ENCODE measurements at regions of chr2 and their contacts with region 1.

Region 1: DNA sequence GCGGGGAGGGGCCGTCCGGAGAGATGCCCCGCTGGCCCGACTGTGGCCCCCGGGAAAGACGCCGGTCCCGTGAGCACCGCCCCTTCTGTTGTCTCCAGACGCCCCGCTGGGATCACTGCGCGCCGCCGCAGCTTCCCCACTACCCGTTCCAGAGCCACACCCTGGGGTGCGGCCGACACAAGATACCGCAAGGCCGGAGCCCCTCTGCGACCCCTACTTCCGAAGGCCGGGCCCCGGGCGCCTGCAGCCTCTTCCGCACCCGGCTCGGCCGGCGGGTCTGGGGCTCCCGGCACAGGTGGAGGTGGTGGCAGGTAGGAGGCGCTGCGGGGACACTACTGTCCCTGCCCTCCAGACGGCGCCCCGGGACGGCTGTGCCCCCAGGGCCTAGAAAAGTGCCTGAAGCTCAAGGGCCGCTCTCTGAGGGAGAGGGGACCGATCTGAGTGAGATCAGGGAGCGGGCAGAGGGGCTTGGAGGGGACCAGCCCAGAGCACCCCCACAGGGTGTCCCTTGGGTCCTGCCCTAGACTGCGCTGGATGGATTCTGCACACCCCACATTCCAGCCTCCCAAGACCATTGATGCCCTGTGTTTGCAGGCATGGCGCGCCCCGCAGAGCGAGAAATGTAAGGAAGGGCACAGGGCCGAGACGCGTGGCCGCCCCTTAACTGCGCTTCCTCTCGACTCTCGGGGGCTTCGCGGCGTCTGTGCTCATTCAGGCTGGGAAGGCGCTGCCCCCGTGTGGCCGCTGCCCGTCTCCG is 80.0 kb downstream of the GFPT1 start:
- DNase-seq: peak; percentile 85 to 93 (median 91)
- H3K4me3 ChIP-seq: peak overlapping the region; percentile 56
- H3K27ac ChIP-seq: peak overlapping the region; percentile 61 to 70
- H3K4me1 ChIP-seq: peaks cover 11% of the 10 kb centered on the region
- H3K27me3 ChIP-seq: no peaks in the 10 kb centered on the region
- CTCF ChIP-seq: peak; percentile 80 to 92 (median 82)
- EP300 ChIP-seq: no peak
- POLR2A ChIP-seq: peak; percentile 46

Region 2: DNA sequence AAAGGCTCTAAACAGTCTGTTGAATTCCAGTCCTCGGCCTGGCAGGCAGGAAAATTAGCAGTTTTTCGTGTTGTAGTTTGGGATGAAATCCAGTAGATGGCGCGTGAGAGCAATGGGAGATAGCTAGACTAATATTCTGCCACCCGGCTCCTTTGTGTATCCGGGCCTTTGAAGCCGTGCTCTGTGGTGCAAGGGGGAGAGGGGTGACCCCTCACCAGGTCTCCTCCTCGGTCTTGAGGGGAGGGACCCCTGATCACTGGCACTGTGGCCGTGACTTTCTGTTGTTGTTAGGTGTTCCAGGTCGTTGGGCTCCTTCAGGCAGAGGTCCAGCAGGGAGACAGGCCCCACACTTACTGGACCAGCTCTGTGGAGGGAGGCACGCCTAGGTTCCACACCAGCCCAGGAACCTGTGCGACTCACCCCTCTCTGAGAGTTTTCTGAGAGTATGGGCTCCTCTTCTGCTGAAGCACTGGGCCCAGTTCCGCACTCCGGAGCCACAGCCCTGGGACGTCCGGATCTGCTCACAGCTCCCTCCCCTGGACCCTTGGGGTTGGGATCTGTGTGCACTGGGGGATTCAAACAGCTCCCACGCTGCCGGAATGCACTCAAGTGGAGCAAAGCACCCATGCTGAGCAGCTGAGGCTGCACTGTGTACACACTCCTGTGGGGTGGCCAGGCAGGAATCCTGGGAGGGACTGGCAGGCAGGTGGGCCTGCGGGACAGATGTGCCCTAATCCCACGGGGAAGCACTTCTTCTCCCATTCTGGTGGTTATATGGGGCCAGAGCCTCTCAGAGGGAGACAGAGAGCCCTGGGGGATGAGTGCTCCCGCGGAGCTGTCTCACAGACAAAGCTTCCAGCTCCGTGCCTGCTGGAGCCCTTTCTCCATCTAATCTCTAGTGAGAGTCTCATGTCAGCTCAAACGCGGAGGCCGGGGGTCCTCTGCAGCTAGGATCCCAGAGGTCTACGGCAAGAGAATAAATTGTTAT is 363.1 kb before region 1 on chr2:
- intact Hi-C with region 1: loop called in 1 of 4 experiments (anchors 1 kb)
- DNase-seq: peak; percentile 32 to 70 (median 58)
- H3K4me3 ChIP-seq: no peak overlapping the region
- H3K27ac ChIP-seq: no peak overlapping the region
- H3K4me1 ChIP-seq: no peaks in the 10 kb centered on the region
- H3K27me3 ChIP-seq: no peaks in the 10 kb centered on the region
- CTCF ChIP-seq: peak; percentile 76 to 83 (median 79)
- EP300 ChIP-seq: no peak
- POLR2A ChIP-seq: no peak

Region 3: GRCh38 chr2:69149631-69150215 is 157.3 kb before region 1 on chr2:
- intact Hi-C with region 1: loop called in 2 of 4 experiments (anchors 5 to 10 kb)
- DNase-seq: peak; percentile 75 to 83 (median 77)
- H3K4me3 ChIP-seq: no peak overlapping the region
- H3K27ac ChIP-seq: peak overlapping the region in 1 of 2 donors; percentile 90
- H3K4me1 ChIP-seq: peaks cover 35% of the 10 kb centered on the region
- H3K27me3 ChIP-seq: no peaks in the 10 kb centered on the region
- CTCF ChIP-seq: no peak
- EP300 ChIP-seq: no peak
- POLR2A ChIP-seq: peak; percentile 8

Region 4: GRCh38 chr2:69163109-69163508 is 143.9 kb before region 1 on chr2:
- intact Hi-C with region 1: loop called in 2 of 4 experiments (anchors 10 kb)
- DNase-seq: no peak
- H3K4me3 ChIP-seq: no peak overlapping the region
- H3K27ac ChIP-seq: no peak overlapping the region
- H3K4me1 ChIP-seq: peaks cover 8% of the 10 kb centered on the region
- H3K27me3 ChIP-seq: no peaks in the 10 kb centered on the region
- CTCF ChIP-seq: no peak
- EP300 ChIP-seq: no peak
- POLR2A ChIP-seq: no peak

Region 5: DNA sequence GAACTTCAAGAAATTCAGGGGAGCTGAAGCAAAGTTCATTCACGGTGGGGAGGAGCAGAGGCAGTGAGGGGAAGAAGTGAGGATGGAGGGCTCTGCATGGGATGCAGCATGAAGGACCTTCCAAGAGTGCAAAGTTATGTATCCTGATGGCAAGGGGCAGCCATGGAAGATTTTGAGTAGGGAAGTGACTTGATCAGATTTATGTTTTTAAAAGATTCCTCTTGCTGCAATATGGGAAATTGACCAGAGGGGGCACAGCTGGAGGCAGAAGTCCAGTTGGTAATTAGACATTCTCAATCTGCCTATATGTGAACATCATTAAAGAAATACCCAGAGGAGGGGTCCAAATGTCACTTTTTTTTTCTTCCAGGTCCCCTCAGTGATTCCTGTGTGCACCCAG is 413.4 kb after region 1 on chr2:
- intact Hi-C with region 1: no loop called
- DNase-seq: no peak
- H3K4me3 ChIP-seq: no peak overlapping the region
- H3K27ac ChIP-seq: no peak overlapping the region
- H3K4me1 ChIP-seq: no peaks in the 10 kb centered on the region
- H3K27me3 ChIP-seq: no peaks in the 10 kb centered on the region
- CTCF ChIP-seq: no peak
- EP300 ChIP-seq: no peak
- POLR2A ChIP-seq: no peak